Right ventricle myocardium superior (tissue), 1 donor: ENCODE measurements at regions of chr22 and their contacts with region 1.

Region 1: DNA sequence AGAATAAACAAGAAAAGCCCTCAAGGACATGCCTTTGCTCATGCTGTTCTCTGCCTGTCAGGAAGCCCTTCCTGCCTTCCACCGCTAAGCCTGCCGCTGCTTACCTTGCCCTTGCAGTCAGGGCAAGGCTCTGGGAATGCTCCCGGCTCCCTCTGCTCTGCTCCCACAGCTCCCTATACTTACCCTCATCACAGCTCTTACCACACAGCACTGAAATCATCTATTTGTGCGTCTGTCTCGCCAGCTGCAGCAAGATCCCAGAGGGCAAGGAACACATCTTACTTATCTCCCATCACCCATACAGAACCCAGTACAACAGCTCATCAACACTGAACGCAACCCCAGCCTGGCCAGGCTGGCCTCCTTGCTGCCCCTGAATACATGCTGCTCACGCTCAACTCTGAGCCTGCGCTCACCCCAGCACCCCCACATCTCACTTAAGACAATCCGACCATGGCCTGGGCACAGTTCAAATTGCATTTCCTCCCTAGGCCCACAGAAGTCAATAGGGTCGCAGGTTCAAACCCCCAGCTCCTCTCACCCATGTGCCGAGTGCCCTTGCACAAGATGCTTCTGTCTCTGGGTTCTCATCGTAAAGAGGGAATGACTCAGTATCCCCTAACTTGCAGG is 161.8 kb downstream of the IGLL1 start:
- DNase-seq: no peak
- ATAC-seq: no peak

Region 2: GRCh38 chr22:23376256-23376655 is 42.0 kb before region 1 on chr22:
- intact Hi-C with region 1: no loop called
- DNase-seq: no peak
- ATAC-seq: no peak

Region 3: GRCh38 chr22:23402275-23403151 is 15.8 kb before region 1 on chr22:
- intact Hi-C with region 1: loop called (anchors 2 kb)
- DNase-seq: no peak
- ATAC-seq: peak; percentile 62

Region 4: DNA sequence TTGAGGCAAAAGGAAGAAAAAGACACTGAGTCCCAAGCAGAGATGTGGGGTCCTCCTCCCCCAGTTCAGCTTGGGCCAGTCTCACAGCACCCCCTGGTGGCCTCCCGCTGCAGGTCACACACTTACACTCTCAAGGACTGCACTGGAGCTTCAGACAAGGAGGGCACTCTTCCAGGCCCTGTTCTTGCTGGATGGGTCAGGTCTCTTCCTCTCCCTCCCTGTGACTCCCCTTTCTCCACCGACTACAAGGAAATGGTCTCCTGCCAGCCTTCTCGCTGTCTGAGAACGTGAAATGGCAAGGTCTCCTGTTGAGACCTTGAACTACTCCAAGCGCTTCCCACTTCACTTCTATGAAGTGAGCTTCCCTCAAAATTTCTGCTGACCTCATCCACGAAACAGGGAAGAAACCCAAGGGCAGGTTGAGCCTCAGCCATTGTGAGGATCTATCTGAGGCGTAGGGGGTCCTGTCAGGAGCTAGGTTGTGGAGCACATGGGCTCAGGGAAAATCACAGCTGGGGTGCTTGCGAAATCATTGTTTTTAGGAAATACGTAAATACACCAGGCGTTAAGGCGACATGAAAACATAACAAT is 173.0 kb after region 1 on chr22:
- intact Hi-C with region 1: no loop called
- DNase-seq: peak; percentile 69
- ATAC-seq: peak; percentile 74